Lower leg skin (tissue), 4 donors: ENCODE measurements at regions of chr6 and their contacts with region 1.

Region 1: GRCh38 chr6:130322673-130323268 is 43.0 kb upstream of the TMEM200A start:
- DNase-seq: no peak
- H3K4me3 ChIP-seq: no peak overlapping the region
- CTCF ChIP-seq: no peak
- POLR2A ChIP-seq: no peak

Region 2: DNA sequence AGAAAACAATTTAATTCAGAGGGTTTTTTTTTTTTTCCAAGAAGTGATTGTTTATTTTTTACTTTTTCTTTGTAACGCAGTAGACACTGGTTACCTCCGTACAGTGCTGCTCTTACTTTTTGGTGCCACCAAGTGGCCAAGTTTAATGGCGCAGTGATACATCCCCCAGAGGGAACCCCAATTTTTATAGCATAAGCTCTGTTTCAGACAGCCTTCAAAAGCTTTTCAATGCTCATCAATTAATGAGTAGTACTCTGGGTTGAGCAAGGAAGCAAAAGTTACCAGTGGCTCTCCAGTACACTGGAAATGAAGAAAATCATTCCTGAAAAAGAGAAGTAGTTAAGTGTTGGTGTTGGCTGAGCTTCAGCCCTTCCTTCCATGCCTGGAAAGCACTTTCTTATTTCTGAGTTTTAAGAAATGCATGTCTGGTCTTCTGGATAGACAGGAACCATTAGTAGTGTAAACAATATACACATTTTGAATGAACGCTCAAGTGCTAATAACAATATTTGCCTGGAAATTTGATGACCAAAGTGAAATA is 375.3 kb after region 1 on chr6:
- intact Hi-C with region 1: loop called (anchors 10 kb)
- DNase-seq: peak in 1 of 2 donors; percentile 21
- H3K4me3 ChIP-seq: no peak overlapping the region
- CTCF ChIP-seq: no peak
- POLR2A ChIP-seq: no peak

Region 3: GRCh38 chr6:130843575-130844320 is 521.0 kb after region 1 on chr6:
- intact Hi-C with region 1: loop called (anchors 10 kb)
- DNase-seq: no peak
- H3K4me3 ChIP-seq: no peak overlapping the region
- CTCF ChIP-seq: no peak
- POLR2A ChIP-seq: no peak

Region 4: GRCh38 chr6:130872250-130873095 is 549.7 kb after region 1 on chr6:
- intact Hi-C with region 1: loop called (anchors 10 kb)
- DNase-seq: peak; percentile 45 to 94
- H3K4me3 ChIP-seq: no peak overlapping the region
- CTCF ChIP-seq: no peak
- POLR2A ChIP-seq: no peak